PC-3 (cell line): ENCODE measurements at regions of chr3 and their contacts with region 1.

Region 1: GRCh38 chr3:79086514-79086913 is 681.3 kb downstream of the ROBO1 start:
- DNase-seq: peak; percentile 76
- ATAC-seq: peak; percentile 71
- H3K4me3 ChIP-seq: no peak overlapping the region
- H3K27ac ChIP-seq: no peak overlapping the region
- H3K4me1 ChIP-seq: no peaks in the 10 kb centered on the region
- H3K27me3 ChIP-seq: peaks cover 26% of the 10 kb centered on the region
- CTCF ChIP-seq: peak; percentile 86

Region 2: DNA sequence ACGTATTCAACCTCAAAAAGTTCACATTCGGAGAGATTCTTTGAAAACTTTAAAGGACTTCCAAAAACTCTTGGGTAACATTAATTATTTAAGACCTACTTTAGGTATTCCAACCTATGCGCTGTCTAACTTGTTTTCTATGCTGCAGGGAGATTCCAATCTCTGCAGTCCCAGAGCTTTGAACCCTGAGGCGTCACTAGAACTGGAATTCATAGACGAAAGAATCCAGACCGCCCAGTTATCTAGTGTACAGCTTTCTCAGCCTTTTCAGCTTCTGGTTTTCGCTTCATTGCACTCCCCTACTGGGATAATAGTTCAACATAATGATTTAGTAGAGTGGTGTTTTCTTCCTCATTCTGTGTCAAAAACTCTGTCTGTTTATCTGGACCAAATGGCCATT is 30.0 kb before region 1 on chr3:
- CTCF ChIA-PET with region 1: no interaction called
- POLR2A ChIA-PET with region 1: no interaction called
- intact Hi-C with region 1: no loop called
- DNase-seq: no peak
- ATAC-seq: no peak
- H3K4me3 ChIP-seq: no peak overlapping the region
- H3K27ac ChIP-seq: no peak overlapping the region
- H3K4me1 ChIP-seq: no peaks in the 10 kb centered on the region
- H3K27me3 ChIP-seq: no peaks in the 10 kb centered on the region
- CTCF ChIP-seq: no peak

Region 3: GRCh38 chr3:79097964-79098660 is 11.6 kb after region 1 on chr3:
- CTCF ChIA-PET with region 1: interaction called, 3 read pairs
- POLR2A ChIA-PET with region 1: interaction called, 11 read pairs
- intact Hi-C with region 1: no loop called
- DNase-seq: no peak
- ATAC-seq: no peak; the same call in 1 of the 2 replicates
- H3K4me3 ChIP-seq: no peak overlapping the region
- H3K27ac ChIP-seq: no peak overlapping the region
- H3K4me1 ChIP-seq: no peaks in the 10 kb centered on the region
- H3K27me3 ChIP-seq: no peaks in the 10 kb centered on the region; the same call in 1 of the 2 replicates
- CTCF ChIP-seq: no peak

Region 4: GRCh38 chr3:79111375-79112052 is 25.0 kb after region 1 on chr3:
- CTCF ChIA-PET with region 1: no interaction called
- POLR2A ChIA-PET with region 1: no interaction called
- intact Hi-C with region 1: loop called (anchors 2 kb)
- DNase-seq: no peak
- ATAC-seq: no peak
- H3K4me3 ChIP-seq: no peak overlapping the region
- H3K27ac ChIP-seq: no peak overlapping the region
- H3K4me1 ChIP-seq: no peaks in the 10 kb centered on the region; the same call in 1 of the 2 replicates
- H3K27me3 ChIP-seq: no peaks in the 10 kb centered on the region
- CTCF ChIP-seq: no peak

Region 5: DNA sequence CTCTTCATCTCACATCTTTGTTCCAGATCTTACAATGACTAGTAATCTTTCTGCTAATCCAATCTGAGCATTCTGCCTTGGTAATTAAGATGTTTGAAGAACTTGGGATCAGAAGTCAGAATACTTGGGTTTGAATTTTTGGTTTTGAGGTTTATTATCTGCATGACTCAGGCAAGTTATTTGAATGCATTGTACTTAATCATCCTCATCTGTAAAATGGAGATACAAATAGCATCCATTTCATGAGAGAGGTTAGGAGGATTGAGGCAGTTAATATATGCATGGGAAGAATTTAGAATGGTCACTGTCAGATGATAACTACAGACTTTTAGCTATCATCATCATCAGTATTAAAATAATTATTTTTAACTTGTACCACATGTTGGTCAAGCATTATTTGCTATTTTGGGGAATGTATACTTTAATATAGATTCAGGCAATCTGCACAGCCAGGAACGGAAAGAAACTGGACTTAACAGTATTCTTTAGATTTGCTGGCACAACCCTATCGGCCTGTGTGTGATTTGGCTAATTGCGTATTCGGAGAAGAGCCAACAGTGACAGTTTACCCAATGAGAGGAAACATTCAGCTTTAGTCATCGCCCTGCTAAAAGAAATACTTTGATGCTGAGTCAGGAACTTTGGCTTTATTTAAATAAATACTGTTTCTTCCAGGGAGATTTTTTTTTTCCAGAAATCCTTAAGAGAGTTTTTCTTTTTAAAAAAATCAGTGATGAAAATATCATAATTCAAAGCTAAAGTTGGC is 81.3 kb after region 1 on chr3:
- CTCF ChIA-PET with region 1: no interaction called
- POLR2A ChIA-PET with region 1: no interaction called
- intact Hi-C with region 1: loop called (anchors 5 kb)
- DNase-seq: peak; percentile 95
- ATAC-seq: peak; percentile 97
- H3K4me3 ChIP-seq: no peak overlapping the region
- H3K27ac ChIP-seq: peak overlapping the region; percentile 53
- H3K4me1 ChIP-seq: peaks cover 22% of the 10 kb centered on the region
- H3K27me3 ChIP-seq: no peaks in the 10 kb centered on the region
- CTCF ChIP-seq: no peak

Region 6: GRCh38 chr3:79497447-79498111 is 411.1 kb after region 1 on chr3:
- CTCF ChIA-PET with region 1: no interaction called
- POLR2A ChIA-PET with region 1: no interaction called
- intact Hi-C with region 1: loop called (anchors 2 kb)
- DNase-seq: peak; percentile 50
- ATAC-seq: no peak
- H3K4me3 ChIP-seq: no peak overlapping the region
- H3K27ac ChIP-seq: no peak overlapping the region
- H3K4me1 ChIP-seq: no peaks in the 10 kb centered on the region
- H3K27me3 ChIP-seq: no peaks in the 10 kb centered on the region
- CTCF ChIP-seq: peak; percentile 81